Stomach (tissue), 19 donors: ENCODE measurements at regions of chr2 and their contacts with region 1.

Region 1: DNA sequence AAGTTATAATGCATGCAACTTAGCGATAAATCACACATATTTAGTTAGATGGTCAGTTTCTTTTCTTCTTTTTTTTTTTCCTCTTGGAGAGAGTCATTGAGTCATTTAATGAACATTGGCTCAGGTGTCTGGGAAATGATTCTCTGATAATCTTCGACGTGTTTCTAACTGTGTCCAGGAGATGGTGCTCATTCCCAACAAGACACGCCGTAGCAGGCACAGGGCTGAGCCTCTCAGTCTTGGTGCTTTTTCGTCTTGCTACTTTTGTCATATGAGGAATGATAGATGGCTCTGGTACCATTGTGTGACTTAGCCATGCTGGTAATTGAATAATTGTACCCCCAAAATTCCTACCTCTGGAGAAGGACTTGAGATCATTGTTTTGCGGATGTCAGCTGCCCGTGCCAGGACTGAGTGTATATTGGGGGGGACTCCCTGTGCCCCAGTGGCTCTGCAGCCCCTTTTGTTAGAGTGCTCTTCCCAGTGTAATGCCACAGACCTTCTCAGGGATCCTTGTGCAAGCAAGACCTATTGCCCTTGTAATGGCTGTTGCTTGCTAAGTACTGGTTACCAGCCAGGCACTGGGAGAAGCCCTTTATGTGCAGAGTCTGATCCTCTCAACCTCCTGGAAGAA is 107.6 kb upstream of the CYRIA start:
- DNase-seq: peak; percentile 38 to 75
- H3K4me3 ChIP-seq: no peak overlapping the region
- H3K27ac ChIP-seq: no peak overlapping the region
- H3K4me1 ChIP-seq: no peaks in the 10 kb centered on the region
- H3K27me3 ChIP-seq: peaks cover 0 to 5% (median 0%) of the 10 kb centered on the region in 3 donors
- CTCF ChIP-seq: peak in 5 of 7 experiments; percentile 19 to 53 (median 29)
- EP300 ChIP-seq: no peak
- POLR2A ChIP-seq: no peak

Region 2: GRCh38 chr2:16869711-16870110 is 96.5 kb after region 1 on chr2:
- intact Hi-C with region 1: no loop called
- DNase-seq: no peak
- H3K4me3 ChIP-seq: no peak overlapping the region
- H3K27ac ChIP-seq: no peak overlapping the region
- H3K4me1 ChIP-seq: no peaks in the 10 kb centered on the region
- H3K27me3 ChIP-seq: no peaks in the 10 kb centered on the region
- CTCF ChIP-seq: no peak
- EP300 ChIP-seq: no peak
- POLR2A ChIP-seq: no peak

Region 3: GRCh38 chr2:17309741-17310339 is 536.6 kb after region 1 on chr2:
- intact Hi-C with region 1: loop called (anchors 10 kb)
- DNase-seq: peak; percentile 40 to 82
- H3K4me3 ChIP-seq: no peak overlapping the region
- H3K27ac ChIP-seq: no peak overlapping the region
- H3K4me1 ChIP-seq: no peaks in the 10 kb centered on the region
- H3K27me3 ChIP-seq: no peaks in the 10 kb centered on the region
- CTCF ChIP-seq: peak in 5 of 7 experiments; percentile 38 to 59 (median 48)
- EP300 ChIP-seq: no peak
- POLR2A ChIP-seq: no peak